Posterior vena cava (tissue), 2 donors: ENCODE measurements at regions of chr18 and their contacts with region 1.

Region 1: GRCh38 chr18:23776306-23776705 is 87.1 kb downstream of the LAMA3 start:
- DNase-seq: no peak

Region 2: GRCh38 chr18:24111936-24112335 is 335.6 kb after region 1 on chr18:
- intact Hi-C with region 1: loop called in 1 of 2 experiments (anchors 2 kb)
- DNase-seq: no peak